Endothelial cell of umbilical vein (primary cell): ENCODE measurements at regions of chr16 and their contacts with region 1.

Region 1: DNA sequence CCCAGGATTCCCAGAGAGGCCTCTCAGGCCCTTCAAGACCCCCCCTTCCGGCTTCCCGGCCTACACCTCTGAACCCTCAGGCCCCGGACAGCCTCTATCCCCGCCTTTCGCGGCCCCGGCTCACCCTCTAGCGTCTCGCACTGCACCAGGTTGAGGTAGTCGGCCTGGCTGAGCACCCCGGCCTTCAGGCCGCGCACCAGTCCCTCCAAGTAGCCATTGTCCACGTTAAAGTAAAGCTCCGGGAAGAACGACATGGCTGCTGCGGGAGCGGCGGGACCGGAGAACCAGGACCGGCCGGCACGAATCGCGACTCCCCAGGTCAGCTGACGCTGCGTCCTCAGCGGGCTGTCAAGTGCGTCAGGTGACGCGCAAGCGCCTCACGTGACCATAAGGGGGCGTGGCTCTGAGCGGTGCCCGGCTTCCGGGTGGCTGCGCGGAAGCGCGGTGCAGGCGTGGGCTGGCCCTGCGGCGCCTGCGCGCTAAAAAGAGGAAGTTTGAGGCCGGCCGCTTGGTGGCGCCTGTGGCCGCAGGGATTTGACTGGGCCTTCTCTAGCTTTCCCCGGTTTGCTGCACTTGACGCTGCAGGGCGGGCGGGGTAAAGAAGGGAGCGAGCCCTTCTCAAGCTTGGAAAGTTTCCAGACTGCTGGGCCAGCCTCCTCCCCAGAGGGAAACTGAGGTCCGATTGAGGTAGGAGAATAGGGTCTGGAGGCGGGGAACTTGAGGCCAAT is at the start of gene ATP6V0D1:
- DNase-seq: peak; percentile 99
- H3K4me3 ChIP-seq: peak within 1 kb of the TSS; percentile 69 to 80 (median 77)
- H3K27ac ChIP-seq: peak within 1 kb of the TSS; percentile 73
- H3K4me1 ChIP-seq: peaks cover 22% of the 10 kb centered on the region
- H3K27me3 ChIP-seq: no peaks in the 10 kb centered on the region
- CTCF ChIP-seq: peak; percentile 96
- POLR2A ChIP-seq: peak; percentile 74
- total RNA-seq, gene ATP6V0D1: 77.1 and 82.8 TPM in 2 replicates

Region 2: DNA sequence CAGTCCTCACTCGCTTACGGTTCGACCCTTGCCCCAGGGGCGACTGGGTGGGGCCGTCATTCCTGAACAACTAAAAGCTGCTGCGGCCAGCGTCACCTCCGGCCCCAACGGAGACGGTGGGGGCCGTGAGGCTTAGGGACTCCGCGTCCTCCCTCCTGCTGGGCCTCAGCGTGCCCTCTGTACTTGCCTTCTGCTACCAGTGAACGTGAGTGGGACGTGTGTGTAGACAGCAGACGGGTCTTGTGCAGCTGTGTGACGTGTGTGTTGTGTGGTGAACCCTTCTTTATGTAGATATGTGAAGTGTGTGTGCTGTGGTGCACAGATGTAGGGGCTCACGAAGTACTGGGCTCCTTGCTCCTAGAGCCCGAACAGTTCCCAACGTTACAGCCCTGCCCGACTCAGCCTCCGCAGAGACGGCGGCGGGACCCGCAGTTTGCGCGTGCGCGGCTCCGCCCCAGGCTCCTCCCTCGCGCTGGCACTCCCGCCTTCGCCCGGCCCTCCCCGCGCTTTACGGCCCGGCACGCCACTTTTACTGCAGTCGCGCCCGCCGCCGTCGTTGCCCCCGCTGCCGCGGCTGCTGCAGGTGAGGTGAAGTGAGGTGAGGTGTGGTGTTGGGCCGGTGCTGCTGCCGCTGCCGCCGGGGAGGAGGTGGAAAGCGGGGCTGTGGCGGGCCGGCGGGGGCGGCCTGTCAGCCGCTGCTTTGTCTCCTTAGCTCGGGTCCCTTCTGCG is 371.4 kb before region 1 on chr16 and contains the start of gene PHAF1:
- CTCF ChIA-PET with region 1: no interaction called
- POLR2A ChIA-PET with region 1: no interaction called
- dilution Hi-C with region 1: no loop called
- intact Hi-C with region 1: no loop called
- DNase-seq: peak; percentile 94
- H3K4me3 ChIP-seq: peak within 1 kb of the TSS; percentile 82 to 92 (median 82)
- H3K27ac ChIP-seq: no peak within 1 kb of the TSS
- H3K4me1 ChIP-seq: peaks cover 10% of the 10 kb centered on the region
- H3K27me3 ChIP-seq: no peaks in the 10 kb centered on the region
- CTCF ChIP-seq: no peak
- POLR2A ChIP-seq: peak; percentile 97
- total RNA-seq, gene PHAF1: 16.1 and 18.5 TPM in 2 replicates

Region 3: GRCh38 chr16:67499106-67499505 is 18.1 kb after region 1 on chr16:
- CTCF ChIA-PET with region 1: interaction called, 47 read pairs
- POLR2A ChIA-PET with region 1: no interaction called
- dilution Hi-C with region 1: no loop called
- intact Hi-C with region 1: loop called (anchors 1 kb)
- DNase-seq: no peak
- H3K4me3 ChIP-seq: no peak overlapping the region
- H3K27ac ChIP-seq: no peak overlapping the region
- H3K4me1 ChIP-seq: no peaks in the 10 kb centered on the region
- H3K27me3 ChIP-seq: no peaks in the 10 kb centered on the region
- CTCF ChIP-seq: no peak
- POLR2A ChIP-seq: no peak